Motor neuron (in vitro differentiated cells): ENCODE measurements at regions of chr13 and their contacts with region 1.

Region 1: DNA sequence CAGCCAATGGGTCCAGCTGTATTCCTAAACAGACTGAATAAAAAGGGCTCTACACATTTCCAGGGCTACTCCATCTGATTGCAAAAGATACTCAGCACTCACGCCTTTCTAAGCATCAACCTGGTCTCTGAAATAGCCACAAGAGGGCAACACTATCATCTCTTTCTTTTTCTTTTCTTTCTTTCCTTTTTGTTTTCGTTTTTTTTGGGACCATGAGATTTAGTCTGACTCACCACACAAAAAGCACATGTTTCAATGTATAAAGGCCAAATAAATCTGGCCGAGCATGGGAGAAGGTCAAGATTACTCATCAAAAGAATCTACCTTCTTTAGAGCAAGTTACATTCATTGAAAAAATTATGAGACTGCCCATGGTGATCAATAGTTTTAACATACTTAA is 805.6 kb upstream of the ARGLU1 start:
- ATAC-seq: peak; percentile 50 to 72 (median 62)
- H3K4me3 ChIP-seq: no peak overlapping the region
- H3K27ac ChIP-seq: no peak overlapping the region
- H3K4me1 ChIP-seq: peaks cover 7 to 16% of the 10 kb centered on the region in 2 donors

Region 2: GRCh38 chr13:107518298-107518697 is 144.7 kb after region 1 on chr13:
- in situ Hi-C with region 1: no loop called
- ATAC-seq: no peak
- H3K4me3 ChIP-seq: no peak overlapping the region
- H3K27ac ChIP-seq: no peak overlapping the region
- H3K4me1 ChIP-seq: peaks cover 0 to 4% of the 10 kb centered on the region in 2 donors

Region 3: DNA sequence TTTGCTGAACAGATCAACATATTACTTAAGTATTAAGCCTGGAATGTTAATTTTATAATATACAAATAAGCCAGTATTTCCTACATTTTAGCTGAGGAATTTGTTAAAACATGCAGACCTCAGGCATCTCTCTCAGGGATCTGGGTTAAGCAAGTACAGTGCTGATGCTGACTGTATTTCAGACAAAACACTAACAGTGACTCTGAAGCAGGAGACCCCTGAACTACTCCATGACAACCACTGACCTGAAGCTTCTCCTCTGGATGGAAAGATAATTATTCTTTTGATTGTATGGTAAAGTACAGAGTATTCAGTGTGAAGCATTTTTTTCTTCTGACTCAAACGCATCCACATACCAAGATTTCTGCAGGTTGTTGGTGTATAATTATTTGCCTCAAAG is 161.0 kb after region 1 on chr13:
- in situ Hi-C with region 1: no loop called
- ATAC-seq: peak in 4 of 8 experiments; percentile 40 to 70 (median 62)
- H3K4me3 ChIP-seq: no peak overlapping the region
- H3K27ac ChIP-seq: no peak overlapping the region
- H3K4me1 ChIP-seq: peaks cover 0 to 5% of the 10 kb centered on the region in 2 donors

Region 4: GRCh38 chr13:107650081-107650701 is 276.6 kb after region 1 on chr13:
- in situ Hi-C with region 1: loop called in 2 of 9 experiments (anchors 25 kb)
- ATAC-seq: peak; percentile 45 to 94 (median 70)
- H3K4me3 ChIP-seq: no peak overlapping the region
- H3K27ac ChIP-seq: no peak overlapping the region
- H3K4me1 ChIP-seq: no peaks in the 10 kb centered on the region

Region 5: GRCh38 chr13:107867701-107868661 is 494.4 kb after region 1 on chr13:
- in situ Hi-C with region 1: loop called in 3 of 9 experiments (anchors 25 kb)
- ATAC-seq: peak; percentile 59 to 77 (median 74)
- H3K4me3 ChIP-seq: peak overlapping the region; percentile 47 to 94 (median 66)
- H3K27ac ChIP-seq: peak overlapping the region; percentile 56 to 62
- H3K4me1 ChIP-seq: peaks cover 0 to 4% of the 10 kb centered on the region in 2 donors

Region 6: GRCh38 chr13:107977071-107977574 is 603.6 kb after region 1 on chr13:
- in situ Hi-C with region 1: no loop called
- ATAC-seq: no peak
- H3K4me3 ChIP-seq: no peak overlapping the region
- H3K27ac ChIP-seq: no peak overlapping the region
- H3K4me1 ChIP-seq: no peaks in the 10 kb centered on the region